ENCODE measurements at regions of chr1 and their contacts with region 1.

Region 1: DNA sequence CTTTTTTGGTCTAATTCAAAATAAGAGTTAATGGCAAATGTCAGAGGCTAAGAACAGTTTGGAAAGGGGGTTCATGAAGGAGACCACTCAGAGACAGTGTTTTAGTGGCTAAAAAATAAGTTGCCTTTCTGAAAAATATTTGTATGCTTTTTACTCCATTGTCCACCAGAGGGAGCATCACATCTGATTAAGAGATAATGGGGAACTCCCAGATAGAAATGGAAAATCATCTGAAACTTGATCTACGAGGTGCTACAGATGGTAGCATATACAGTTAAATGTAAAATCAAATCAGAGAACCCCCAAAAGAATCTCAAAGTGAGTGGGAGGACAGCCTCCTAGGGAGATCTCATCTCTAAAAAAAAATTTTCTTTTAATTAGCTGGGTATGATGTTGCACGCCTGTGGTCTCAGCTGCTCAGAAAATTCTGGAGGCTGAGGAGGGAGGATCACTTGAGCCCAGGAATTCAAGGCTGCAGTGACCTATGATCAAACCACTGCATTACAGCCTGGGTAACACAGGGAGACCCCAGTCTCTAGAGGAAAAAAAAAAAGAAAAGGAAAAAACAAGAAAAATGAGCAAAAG is 9.7 kb downstream of the SMYD3 start:
- DNase-seq: peak; percentile 60
- ATAC-seq: peak; percentile 65
- H3K4me3 ChIP-seq: no peak overlapping the region
- H3K27ac ChIP-seq: no peak overlapping the region
- H3K4me1 ChIP-seq: peaks cover 0 to 3% of the 10 kb centered on the region in 2 experiments; a peak in 2 of 4 replicates
- H3K27me3 ChIP-seq: no peaks in the 10 kb centered on the region
- CTCF ChIP-seq: peak; percentile 57 to 77 (median 77); a peak in 5 of 6 replicates
- POLR2A ChIP-seq: no peak
- RAD21 ChIP-seq: peak; percentile 77

Region 2: GRCh38 chr1:246753670-246754535 is 256.5 kb after region 1 on chr1:
- CTCF ChIA-PET with region 1: interaction called, 3 read pairs
- POLR2A ChIA-PET with region 1: no interaction called
- RAD21 ChIA-PET with region 1: no interaction called
- intact Hi-C with region 1: loop called (anchors 1 kb)
- DNase-seq: peak; percentile 52
- ATAC-seq: peak; percentile 98
- H3K4me3 ChIP-seq: peak overlapping the region; percentile 9 to 33; a peak in 2 of 4 replicates
- H3K27ac ChIP-seq: no peak overlapping the region
- H3K4me1 ChIP-seq: 0 out of 4 replicates have a peak, but pooled peaks cover 0 to 3% of the 10 kb centered on the region in 2 experiments
- H3K27me3 ChIP-seq: no peaks in the 10 kb centered on the region
- CTCF ChIP-seq: peak; percentile 71 to 82 (median 78)
- POLR2A ChIP-seq: no peak
- RAD21 ChIP-seq: peak; percentile 92